Heart right ventricle (tissue), 16 donors: ENCODE measurements at regions of chr11 and their contacts with region 1.

Region 1: DNA sequence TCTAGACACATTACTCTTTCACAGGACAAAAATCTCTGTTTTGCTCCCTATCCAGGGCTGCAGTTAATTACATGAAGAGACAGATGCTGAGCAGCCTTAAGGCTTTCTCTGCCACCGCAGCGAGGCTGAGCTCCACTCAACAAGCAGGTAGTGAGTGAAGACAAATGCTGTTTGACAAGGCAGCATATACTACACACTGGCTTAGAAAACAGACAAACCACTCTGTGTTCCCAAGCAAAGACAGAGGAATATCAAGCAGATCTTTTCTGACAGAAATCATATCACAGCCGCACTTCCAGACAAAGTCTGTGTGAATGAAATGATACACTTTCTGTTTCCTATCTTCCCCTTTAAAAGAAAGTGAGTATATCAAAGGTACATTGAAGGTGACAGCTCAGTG is 368.1 kb downstream of the DCDC1 start:
- DNase-seq: no peak
- ATAC-seq: no peak
- H3K4me3 ChIP-seq: no peak overlapping the region
- H3K27ac ChIP-seq: no peak overlapping the region
- H3K4me1 ChIP-seq: no peaks in the 10 kb centered on the region
- H3K27me3 ChIP-seq: peaks cover 0 to 9% (median 0%) of the 10 kb centered on the region in 7 donors
- CTCF ChIP-seq: no peak

Region 2: DNA sequence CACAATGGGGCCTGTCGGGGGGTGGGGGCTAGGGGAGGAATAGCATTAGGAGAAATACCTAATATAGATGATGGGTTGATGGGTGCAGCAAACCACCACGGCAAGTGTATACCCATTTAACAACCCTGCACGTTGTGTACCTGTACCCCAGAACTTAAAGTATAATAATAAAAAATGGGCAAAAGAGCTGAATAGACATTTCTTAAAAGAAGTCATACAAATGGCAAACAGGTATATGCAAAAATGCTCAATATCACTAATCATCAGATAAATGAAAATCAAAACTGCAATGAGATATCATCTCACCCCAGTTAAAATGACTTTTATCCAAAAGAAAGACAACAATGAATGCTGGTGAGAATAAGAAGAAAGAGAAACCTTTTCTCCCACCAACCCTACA is 51.6 kb before region 1 on chr11:
- intact Hi-C with region 1: loop called in 1 of 10 experiments (anchors 10 kb)
- DNase-seq: no peak
- ATAC-seq: no peak
- H3K4me3 ChIP-seq: no peak overlapping the region
- H3K27ac ChIP-seq: no peak overlapping the region
- H3K4me1 ChIP-seq: no peaks in the 10 kb centered on the region
- H3K27me3 ChIP-seq: no peaks in the 10 kb centered on the region
- CTCF ChIP-seq: no peak

Region 3: DNA sequence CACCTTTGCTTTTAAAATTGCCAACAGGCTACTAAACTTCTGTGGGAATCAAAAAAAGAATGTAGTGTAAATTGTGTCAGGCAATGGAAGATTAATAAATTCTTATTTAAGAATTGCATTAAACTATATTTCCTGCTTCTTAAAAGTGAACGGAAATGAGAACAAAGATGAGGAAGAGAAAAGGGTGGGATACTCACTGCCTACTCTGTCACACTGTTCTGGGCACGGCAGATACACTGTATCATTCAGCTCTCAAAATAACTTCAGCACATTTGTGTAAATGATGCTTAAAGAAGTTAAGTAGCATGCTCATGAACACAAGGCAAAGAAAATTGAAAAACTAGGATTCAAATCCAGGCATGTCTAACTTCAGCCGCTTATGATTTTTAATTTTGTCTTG is 149.4 kb after region 1 on chr11:
- intact Hi-C with region 1: no loop called
- DNase-seq: no peak
- ATAC-seq: no peak
- H3K4me3 ChIP-seq: no peak overlapping the region
- H3K27ac ChIP-seq: no peak overlapping the region
- H3K4me1 ChIP-seq: no peaks in the 10 kb centered on the region
- H3K27me3 ChIP-seq: no peaks in the 10 kb centered on the region
- CTCF ChIP-seq: no peak

Region 4: DNA sequence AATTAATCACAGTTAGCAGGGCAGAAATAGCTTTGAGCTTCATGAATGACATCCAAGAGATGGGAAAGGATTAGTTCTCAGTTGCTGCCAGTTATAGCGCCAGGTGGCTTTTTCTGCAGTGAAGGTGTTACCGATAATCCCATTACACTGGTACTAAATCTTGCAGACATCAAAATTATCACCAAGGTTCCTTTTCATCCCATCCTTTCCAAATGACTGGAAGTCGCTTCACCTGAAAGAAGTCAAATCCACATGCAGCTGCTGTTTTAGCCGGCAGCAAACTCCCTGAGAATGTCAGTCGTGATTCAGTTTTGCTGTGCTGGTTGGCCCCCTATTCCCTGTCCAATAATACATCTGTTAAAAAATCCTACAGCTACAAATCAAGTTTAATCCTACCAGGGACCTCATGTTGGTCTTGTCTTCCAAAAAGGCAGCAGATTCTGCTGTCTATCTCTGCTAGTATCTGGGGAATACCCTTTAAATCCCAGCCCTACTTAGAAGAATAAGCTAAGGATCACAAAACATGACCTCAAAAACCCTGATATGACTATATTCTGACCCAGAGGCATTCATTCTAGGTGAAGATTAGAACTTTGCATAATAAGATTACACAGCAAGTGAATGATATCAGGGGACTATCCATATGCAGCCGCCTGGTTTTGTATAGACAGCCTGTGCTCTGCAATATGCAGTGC is 476.2 kb after region 1 on chr11:
- intact Hi-C with region 1: no loop called
- DNase-seq: no peak
- ATAC-seq: no peak
- H3K4me3 ChIP-seq: no peak overlapping the region
- H3K27ac ChIP-seq: no peak overlapping the region
- H3K4me1 ChIP-seq: no peaks in the 10 kb centered on the region
- H3K27me3 ChIP-seq: no peaks in the 10 kb centered on the region
- CTCF ChIP-seq: no peak